Heart left ventricle (tissue), 16 donors: ENCODE measurements at regions of chr9 and their contacts with region 1.

Region 1: GRCh38 chr9:224582-225520 is 10.2 kb downstream of the DOCK8 start:
- DNase-seq: no peak
- ATAC-seq: no peak
- H3K4me3 ChIP-seq: no peak overlapping the region
- H3K27ac ChIP-seq: peak overlapping the region in 1 of 12 donors; percentile 46
- H3K4me1 ChIP-seq: peaks cover 0 to 67% (median 0%) of the 10 kb centered on the region in 12 donors
- H3K27me3 ChIP-seq: peaks cover 0 to 3% (median 0%) of the 10 kb centered on the region in 9 donors
- CTCF ChIP-seq: no peak
- POLR2A ChIP-seq: no peak

Region 2: DNA sequence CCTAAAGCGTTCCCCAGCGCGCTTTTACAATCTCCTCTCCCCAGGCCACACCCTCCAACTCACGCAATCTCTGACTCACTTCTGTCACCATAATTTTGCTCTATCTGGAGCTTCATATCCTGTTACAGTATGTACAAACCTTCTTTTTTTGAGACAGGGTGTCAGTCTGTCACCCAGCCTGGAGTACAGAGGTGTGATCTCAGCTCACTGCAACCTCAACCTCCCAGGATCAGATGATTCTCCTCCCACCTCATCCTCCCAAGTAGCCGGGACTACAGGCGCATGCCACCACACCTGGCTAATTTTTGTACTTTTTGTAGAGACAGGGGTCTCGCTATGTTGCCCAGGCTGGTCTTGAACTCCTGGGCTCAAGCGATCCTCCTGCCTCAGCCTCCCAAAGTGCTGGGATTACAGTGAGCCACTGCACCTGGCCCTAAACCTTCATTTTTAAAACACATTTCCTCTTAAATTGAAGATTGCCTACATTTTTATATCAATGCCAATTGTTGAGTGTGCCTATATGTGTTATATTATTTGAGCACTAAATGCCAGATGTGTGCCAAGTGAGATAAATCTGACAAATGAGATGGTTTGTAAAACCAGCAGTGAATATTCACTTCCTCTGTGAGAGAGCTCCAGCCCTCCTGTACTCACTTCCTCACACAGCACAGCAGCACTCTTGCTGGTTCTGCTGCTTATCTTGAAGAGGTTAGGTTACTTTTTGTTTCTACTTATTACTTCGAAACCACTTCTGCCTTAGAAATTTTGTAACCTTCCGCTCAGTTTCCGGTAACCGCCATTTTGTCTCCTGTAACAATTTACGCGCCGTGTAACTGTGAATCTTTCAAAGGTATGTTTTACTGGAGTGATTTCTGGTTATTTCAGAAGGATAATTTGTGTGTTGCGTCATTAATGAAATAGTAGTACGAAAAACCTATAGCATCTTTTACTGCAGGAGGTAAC is 47.7 kb after region 1 on chr9:
- intact Hi-C with region 1: loop called in 1 of 10 experiments (anchors 10 kb)
- DNase-seq: peak in 3 of 5 donors; percentile 22 to 36 (median 30)
- ATAC-seq: peak in 3 of 4 donors; percentile 54 to 83 (median 69)
- H3K4me3 ChIP-seq: peak overlapping the region in 4 of 12 donors; percentile 5 to 52 (median 30)
- H3K27ac ChIP-seq: peak overlapping the region in 4 of 12 donors; percentile 33 to 93 (median 45)
- H3K4me1 ChIP-seq: peaks cover 0 to 66% (median 0%) of the 10 kb centered on the region in 12 donors
- H3K27me3 ChIP-seq: no peaks in the 10 kb centered on the region
- CTCF ChIP-seq: no peak
- POLR2A ChIP-seq: no peak